ENCODE measurements at regions of chr15 and their contacts with region 1.

Region 1: GRCh38 chr15:98085003-98085639 is 124.6 kb downstream of the ARRDC4 start:
- DNase-seq: peak; percentile 51 to 75 (median 60)
- H3K4me3 ChIP-seq: no peak overlapping the region
- H3K27ac ChIP-seq: no peak overlapping the region
- H3K4me1 ChIP-seq: no peaks in the 10 kb centered on the region
- H3K27me3 ChIP-seq: no peaks in the 10 kb centered on the region
- CTCF ChIP-seq: peak; percentile 70 to 75 (median 72)
- POLR2A ChIP-seq: no peak

Region 2: DNA sequence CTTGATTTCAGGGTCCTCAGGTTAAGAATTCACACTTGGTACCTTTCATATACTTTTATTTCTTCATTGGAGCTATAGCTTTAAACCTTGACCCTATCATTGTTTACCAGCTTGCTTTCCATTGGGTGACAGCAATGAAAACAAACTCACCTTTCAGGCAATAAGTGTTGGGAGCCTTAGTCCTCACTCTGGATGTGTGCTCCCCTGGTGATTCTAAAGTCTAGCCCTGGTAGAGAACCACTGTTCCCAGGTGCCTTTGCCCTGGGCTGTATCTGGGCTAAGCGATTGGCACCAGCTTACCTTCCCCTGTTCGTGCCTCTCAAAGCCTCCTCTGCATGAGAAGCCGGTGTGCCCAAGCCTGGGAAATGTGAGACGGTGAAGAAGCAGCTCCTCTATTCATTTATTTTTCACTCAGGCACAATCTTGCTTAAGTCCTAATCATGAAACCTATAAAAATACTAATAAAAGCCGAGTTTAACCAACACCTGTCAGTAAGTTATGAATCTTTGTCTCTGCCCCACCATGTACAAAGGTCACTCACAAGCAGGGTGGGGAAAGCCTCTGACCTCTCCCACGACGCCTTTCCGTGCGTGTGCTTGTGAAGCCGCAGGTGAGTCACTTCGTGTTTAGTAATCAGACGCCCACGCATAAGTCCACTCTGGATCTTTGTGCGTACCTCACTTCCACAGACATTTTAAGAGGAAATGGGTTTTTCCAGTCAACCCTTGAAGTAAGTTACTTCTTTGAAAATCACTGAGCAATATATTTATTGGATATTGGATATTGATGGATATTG is 137.5 kb before region 1 on chr15:
- intact Hi-C with region 1: no loop called
- DNase-seq: no peak
- H3K4me3 ChIP-seq: no peak overlapping the region
- H3K27ac ChIP-seq: no peak overlapping the region
- H3K4me1 ChIP-seq: no peaks in the 10 kb centered on the region
- H3K27me3 ChIP-seq: no peaks in the 10 kb centered on the region
- CTCF ChIP-seq: no peak
- POLR2A ChIP-seq: no peak

Region 3: DNA sequence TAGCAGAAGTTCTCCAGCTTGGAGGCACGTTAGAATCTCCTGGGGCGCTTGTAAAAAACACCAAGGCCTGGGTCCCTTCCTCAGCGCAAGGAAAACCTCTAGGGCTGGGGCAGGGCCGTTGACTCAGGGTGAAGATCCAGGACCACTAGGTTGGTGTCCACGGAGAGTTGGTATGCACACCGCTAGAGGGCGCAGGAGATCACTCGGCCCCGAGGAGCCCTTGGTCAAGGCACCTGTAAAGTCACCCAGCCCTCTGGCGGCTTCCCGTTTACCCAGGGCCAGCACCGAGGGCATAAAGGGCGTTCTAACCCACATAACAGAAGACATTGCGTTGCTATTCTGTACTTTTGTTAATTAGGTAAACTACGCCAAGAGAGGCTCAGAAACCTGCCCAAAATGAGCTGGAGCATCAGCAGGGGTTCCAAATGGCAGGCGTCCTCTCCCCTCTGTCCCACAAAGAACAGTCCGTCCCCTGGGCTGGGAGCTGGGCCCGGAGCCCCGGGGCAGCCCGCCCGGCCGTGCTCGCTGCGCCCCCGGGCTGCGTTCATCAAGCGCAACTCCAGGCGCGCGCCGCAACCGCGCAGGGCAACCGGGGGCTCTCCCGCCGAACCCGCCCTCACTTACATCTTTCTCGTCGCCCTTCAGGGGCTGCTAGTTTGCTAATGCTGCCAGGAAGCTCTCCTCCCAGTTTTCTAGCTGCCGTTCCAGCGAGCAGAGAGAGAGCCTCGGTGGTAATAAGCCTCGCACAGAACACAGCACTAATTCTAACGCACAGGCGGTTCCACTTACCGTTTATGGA is 207.5 kb after region 1 on chr15:
- intact Hi-C with region 1: loop called in 1 of 2 experiments (anchors 10 kb)
- DNase-seq: peak in 5 of 7 donors; percentile 27 to 44 (median 38)
- H3K4me3 ChIP-seq: no peak overlapping the region
- H3K27ac ChIP-seq: no peak overlapping the region
- H3K4me1 ChIP-seq: no peaks in the 10 kb centered on the region
- H3K27me3 ChIP-seq: peaks cover 46% of the 10 kb centered on the region
- CTCF ChIP-seq: peak; percentile 10 to 46 (median 38)
- POLR2A ChIP-seq: no peak

Measured in adrenal gland (tissue), 19 donors.